H1 (cell line): ENCODE measurements at regions of chr16 and their contacts with region 1.

Region 1: GRCh38 chr16:75471723-75472633 is 7.5 kb upstream of the TMEM170A start:
- DNase-seq: no peak
- H3K4me3 ChIP-seq: peak overlapping the region in 1 of 4 experiments; percentile 44; a peak in 1 of 8 replicates
- H3K27ac ChIP-seq: peak overlapping the region; percentile 56; the same call in 1 of the 2 replicates
- H3K4me1 ChIP-seq: peaks cover 1 to 6% (median 5%) of the 10 kb centered on the region in 4 experiments; a peak in 6 of 7 replicates
- H3K27me3 ChIP-seq: no peaks in the 10 kb centered on the region
- CTCF ChIP-seq: peak; percentile 70 to 83 (median 72)
- EP300 ChIP-seq: no peak
- POLR2A ChIP-seq: no peak
- RAD21 ChIP-seq: peak; percentile 71 to 78

Region 2: GRCh38 chr16:75342308-75342829 is 129.6 kb before region 1 on chr16:
- CTCF ChIA-PET with region 1: no interaction called
- POLR2A ChIA-PET with region 1: no interaction called
- DNase-seq: no peak
- H3K4me3 ChIP-seq: no peak overlapping the region
- H3K27ac ChIP-seq: no peak overlapping the region
- H3K4me1 ChIP-seq: no peaks in the 10 kb centered on the region
- H3K27me3 ChIP-seq: no peaks in the 10 kb centered on the region
- CTCF ChIP-seq: no peak
- EP300 ChIP-seq: no peak
- POLR2A ChIP-seq: no peak
- RAD21 ChIP-seq: no peak

Region 3: DNA sequence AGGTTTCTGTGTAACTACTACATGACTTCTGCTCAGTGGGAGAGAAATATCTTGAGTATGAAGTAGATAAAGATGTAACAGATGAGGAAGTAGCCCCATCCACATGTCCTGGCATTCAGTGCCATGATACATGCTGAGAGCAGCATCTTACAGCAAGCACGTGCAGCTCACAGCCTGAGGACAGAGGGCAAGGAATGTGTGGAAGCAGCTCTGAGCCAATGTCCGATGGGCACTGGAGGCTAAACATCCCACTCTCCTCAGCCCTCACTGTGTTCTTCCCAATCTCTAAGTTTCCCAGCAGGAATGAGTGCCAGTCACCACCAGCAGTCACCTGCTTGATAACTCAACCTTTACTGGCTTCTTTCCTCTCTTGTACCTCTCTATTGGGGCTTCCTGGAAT is 79.1 kb before region 1 on chr16:
- CTCF ChIA-PET with region 1: no interaction called
- POLR2A ChIA-PET with region 1: no interaction called
- DNase-seq: no peak
- H3K4me3 ChIP-seq: no peak overlapping the region
- H3K27ac ChIP-seq: no peak overlapping the region
- H3K4me1 ChIP-seq: no peaks in the 10 kb centered on the region
- H3K27me3 ChIP-seq: no peaks in the 10 kb centered on the region
- CTCF ChIP-seq: no peak
- EP300 ChIP-seq: no peak
- POLR2A ChIP-seq: no peak
- RAD21 ChIP-seq: no peak

Region 4: DNA sequence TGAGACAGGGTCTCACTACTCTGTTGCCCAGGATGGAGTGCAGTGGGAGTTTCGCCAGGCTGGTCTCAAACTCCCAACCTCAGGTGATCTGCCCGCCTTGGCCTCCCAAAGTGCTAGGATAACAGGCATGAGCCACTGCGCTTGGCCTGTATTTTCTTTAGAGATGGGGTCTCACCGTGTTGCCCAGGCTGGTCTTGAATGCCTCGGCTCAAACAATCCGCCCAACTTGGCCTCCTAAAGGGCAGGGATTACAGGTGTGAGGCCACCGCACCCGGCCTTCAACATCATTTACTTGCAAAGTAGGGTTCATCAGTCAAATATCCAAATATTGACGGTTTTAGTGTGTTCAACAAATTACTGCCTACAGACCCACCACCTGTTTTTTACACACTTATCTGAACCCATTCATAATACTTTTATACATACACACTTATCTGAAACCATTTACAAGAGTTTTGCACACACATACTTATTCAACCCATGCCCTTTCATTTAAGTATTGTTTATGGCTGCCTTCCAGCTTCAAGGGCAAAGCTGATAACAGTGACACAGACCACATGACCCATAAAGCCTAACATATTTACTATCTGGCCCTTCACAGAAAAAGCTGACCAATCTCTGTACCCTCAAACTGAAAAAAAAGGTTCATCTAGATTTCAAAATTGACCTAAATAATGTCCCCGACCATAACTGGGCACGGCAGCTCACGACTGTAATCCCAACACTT is 19.4 kb before region 1 on chr16:
- CTCF ChIA-PET with region 1: interaction called, 11 read pairs
- POLR2A ChIA-PET with region 1: interaction called, 3 read pairs
- DNase-seq: no peak
- H3K4me3 ChIP-seq: no peak overlapping the region
- H3K27ac ChIP-seq: no peak overlapping the region
- H3K4me1 ChIP-seq: peaks cover 0 to 5% (median 2%) of the 10 kb centered on the region in 4 experiments; a peak in 4 of 7 replicates
- H3K27me3 ChIP-seq: no peaks in the 10 kb centered on the region
- CTCF ChIP-seq: no peak
- EP300 ChIP-seq: no peak
- POLR2A ChIP-seq: no peak
- RAD21 ChIP-seq: no peak

Region 5: DNA sequence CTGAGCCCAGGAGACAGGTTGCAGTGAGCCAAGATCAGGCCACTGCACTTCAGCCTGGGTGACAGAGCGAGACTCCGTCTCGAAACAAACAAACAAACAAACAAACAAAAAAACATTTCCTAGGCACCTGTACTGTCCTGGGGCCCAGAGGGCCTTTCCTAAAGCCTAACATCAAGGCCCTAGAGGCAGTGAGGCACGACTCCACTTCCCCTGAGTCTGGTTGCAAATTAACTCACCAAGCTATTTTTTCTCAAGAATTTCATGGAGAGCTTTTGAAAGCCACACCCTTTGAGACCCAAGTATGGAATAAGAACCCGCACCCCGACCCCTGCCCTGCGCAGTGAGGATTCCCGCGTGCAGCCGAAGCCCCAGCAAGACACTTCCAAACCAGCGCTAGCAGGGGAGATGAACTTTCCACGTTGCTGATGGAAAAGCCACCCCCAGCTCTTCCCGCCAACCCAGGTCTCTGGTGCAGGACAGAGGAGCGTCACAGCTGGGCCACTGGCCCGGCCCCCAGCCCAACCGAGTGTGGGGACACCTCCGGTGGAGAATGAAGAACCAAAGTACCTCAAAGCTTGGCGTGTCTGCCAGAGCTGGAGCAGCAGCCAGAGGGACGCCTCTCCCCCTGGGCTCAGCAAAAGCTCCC is 62.7 kb after region 1 on chr16:
- CTCF ChIA-PET with region 1: interaction called, 14 read pairs
- POLR2A ChIA-PET with region 1: no interaction called
- DNase-seq: no peak
- H3K4me3 ChIP-seq: no peak overlapping the region
- H3K27ac ChIP-seq: no peak overlapping the region
- H3K4me1 ChIP-seq: peaks cover 0 to 6% (median 0%) of the 10 kb centered on the region in 4 experiments; a peak in 1 of 7 replicates
- H3K27me3 ChIP-seq: no peaks in the 10 kb centered on the region
- CTCF ChIP-seq: no peak
- EP300 ChIP-seq: no peak
- POLR2A ChIP-seq: no peak
- RAD21 ChIP-seq: no peak